K562 (cell line): ENCODE measurements at regions of chr3 and their contacts with region 1.

Region 1: DNA sequence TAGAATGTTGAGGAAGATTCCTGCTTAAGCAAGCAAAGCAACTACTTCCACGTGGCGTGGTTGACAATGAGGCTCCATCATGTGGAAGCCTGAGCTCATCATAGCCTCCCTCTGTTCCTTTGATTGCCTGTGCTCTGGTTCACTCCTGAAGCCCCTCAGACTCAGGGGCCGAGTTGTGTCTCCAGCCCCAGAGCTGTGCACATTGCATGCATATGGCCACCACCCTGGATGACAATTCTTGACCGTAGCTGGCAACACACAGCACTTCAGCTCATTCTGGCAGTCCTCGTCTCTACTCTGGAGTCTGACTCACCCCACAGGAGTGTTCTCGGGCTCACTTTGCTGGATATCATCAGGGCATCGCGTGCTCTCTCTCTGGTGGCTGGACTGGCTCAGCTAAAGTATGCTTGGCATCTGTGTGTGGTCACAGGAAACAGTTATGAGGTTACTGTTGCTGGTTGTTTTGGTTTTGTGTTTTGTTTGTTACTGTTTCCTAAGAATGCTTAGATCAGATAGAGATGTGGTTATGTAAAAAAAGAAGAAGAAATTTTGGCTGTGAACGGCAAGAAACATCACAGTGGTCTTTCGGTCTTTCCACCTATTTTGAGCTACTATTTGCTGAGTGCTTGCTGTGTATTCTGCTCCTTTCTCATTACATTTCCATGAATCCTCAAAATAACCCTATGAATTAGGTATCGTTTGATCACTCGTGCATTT is 41.6 kb upstream of the MRPS22 start:
- DNase-seq: no peak
- ATAC-seq: no peak
- H3K4me3 ChIP-seq: no peak overlapping the region
- H3K27ac ChIP-seq: peak overlapping the region; percentile 12; the same call in 1 of the 3 replicates
- H3K4me1 ChIP-seq: peaks cover 42 to 74% of the 10 kb centered on the region in 2 experiments
- H3K27me3 ChIP-seq: no peaks in the 10 kb centered on the region; a peak in 1 of 5 replicates
- CTCF ChIP-seq: no peak
- EP300 ChIP-seq: no peak
- POLR2A ChIP-seq: no peak
- RAD21 ChIP-seq: no peak

Region 2: DNA sequence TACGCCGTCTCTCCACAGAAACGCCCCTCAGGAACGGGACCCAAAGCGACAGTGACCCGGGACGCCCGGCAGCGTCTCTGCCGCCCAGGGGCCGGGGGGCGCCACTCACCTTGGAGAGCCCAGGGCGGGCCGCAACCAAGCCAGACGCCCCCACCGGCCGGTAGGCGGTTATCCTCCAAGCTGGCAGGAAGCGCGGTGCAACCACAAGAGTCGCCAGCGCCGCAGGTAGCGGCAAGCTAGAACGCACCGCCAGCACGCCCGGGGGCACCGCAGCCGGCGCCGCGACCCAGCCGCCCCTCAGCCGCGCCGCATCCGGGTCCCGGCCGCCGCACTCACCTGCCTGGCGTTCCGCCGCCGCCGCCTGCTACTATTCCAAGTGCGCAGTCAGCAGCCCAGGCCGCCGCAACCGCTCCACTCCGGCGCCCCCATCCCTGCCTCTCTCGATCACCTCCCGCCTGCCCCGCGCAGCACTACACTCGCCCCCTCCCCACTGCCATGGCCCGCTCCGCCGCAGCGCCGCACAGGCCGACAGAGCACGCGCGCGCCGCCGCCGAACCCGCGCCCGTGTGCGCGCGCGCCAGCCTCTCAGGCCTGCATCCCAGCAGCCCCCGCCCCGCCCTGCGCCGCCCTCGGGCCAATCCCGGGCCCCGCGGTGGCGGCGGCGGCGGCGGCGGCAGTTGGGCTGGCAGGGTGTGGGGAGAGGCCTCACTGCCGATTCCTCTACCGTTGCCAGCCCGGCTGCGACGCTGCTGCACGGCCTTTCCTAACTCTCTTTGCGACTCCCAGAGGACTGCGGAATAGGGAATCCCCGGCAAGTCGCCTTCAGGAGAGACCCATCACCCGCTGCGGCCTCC is 467.7 kb before region 1 on chr3 and contains the start of gene PIK3CB:
- CTCF ChIA-PET with region 1: no interaction called
- POLR2A ChIA-PET with region 1: no interaction called
- in situ Hi-C with region 1: no loop called
- intact Hi-C with region 1: no loop called
- DNase-seq: peak; percentile 91 to 94 (median 92)
- ATAC-seq: peak; percentile 88
- H3K4me3 ChIP-seq: peak within 1 kb of the TSS; percentile 99
- H3K27ac ChIP-seq: peak within 1 kb of the TSS; percentile 91
- H3K4me1 ChIP-seq: peaks cover 8 to 9% of the 10 kb centered on the region in 2 experiments; a peak in 4 of 5 replicates
- H3K27me3 ChIP-seq: no peaks in the 10 kb centered on the region
- CTCF ChIP-seq: peak; percentile 59 to 97 (median 75)
- EP300 ChIP-seq: peak; percentile 2; the same call in 1 of the 2 replicates
- POLR2A ChIP-seq: peak; percentile 94
- RAD21 ChIP-seq: peak; percentile 61 to 70
- polyA plus RNA-seq, gene PIK3CB: 15.3 to 19.6 TPM

Region 3: DNA sequence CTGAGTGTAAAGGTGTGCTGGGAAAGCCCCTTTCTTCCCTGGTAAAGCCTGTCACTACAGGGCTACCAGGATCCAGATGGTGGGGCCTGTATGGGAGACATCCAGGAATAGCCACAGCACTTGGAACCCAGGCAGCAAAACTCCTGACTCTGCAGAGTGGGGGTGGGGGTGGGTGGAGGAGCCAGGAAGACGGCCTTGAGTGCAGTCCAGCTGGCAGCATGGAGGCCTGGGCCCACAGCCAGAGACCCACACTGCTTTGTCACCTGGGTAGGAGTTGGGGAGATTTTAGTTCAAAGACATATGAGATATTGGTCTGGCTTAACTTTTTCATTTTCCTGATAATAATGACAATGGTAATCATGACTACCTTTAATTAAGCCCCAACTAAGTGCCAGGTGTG is 75.1 kb before region 1 on chr3:
- CTCF ChIA-PET with region 1: no interaction called
- POLR2A ChIA-PET with region 1: no interaction called
- in situ Hi-C with region 1: no loop called
- intact Hi-C with region 1: loop called (anchors 1 kb)
- DNase-seq: no peak
- ATAC-seq: no peak
- H3K4me3 ChIP-seq: no peak overlapping the region
- H3K27ac ChIP-seq: no peak overlapping the region
- H3K4me1 ChIP-seq: peaks cover 2 to 8% of the 10 kb centered on the region in 2 experiments; a peak in 3 of 5 replicates
- H3K27me3 ChIP-seq: no peaks in the 10 kb centered on the region
- CTCF ChIP-seq: no peak
- EP300 ChIP-seq: no peak
- POLR2A ChIP-seq: no peak
- RAD21 ChIP-seq: no peak

Region 4: GRCh38 chr3:139312959-139313358 is 10.7 kb after region 1 on chr3:
- CTCF ChIA-PET with region 1: no interaction called
- POLR2A ChIA-PET with region 1: interaction called, 19 read pairs
- in situ Hi-C with region 1: no loop called
- intact Hi-C with region 1: no loop called
- DNase-seq: peak; percentile 82 to 92 (median 88)
- ATAC-seq: peak; percentile 77
- H3K4me3 ChIP-seq: no peak overlapping the region
- H3K27ac ChIP-seq: peak overlapping the region; percentile 61
- H3K4me1 ChIP-seq: peaks cover 32 to 62% of the 10 kb centered on the region in 2 experiments
- H3K27me3 ChIP-seq: no peaks in the 10 kb centered on the region
- CTCF ChIP-seq: no peak
- EP300 ChIP-seq: peak; percentile 47; the same call in 1 of the 2 replicates
- POLR2A ChIP-seq: 0 out of 2 replicates have a peak, but pooled peaks have one; percentile 34
- RAD21 ChIP-seq: no peak

Region 5: GRCh38 chr3:139377378-139377777 is 75.1 kb after region 1 on chr3:
- CTCF ChIA-PET with region 1: no interaction called
- POLR2A ChIA-PET with region 1: no interaction called
- in situ Hi-C with region 1: no loop called
- intact Hi-C with region 1: no loop called
- DNase-seq: no peak
- ATAC-seq: no peak
- H3K4me3 ChIP-seq: no peak overlapping the region
- H3K27ac ChIP-seq: no peak overlapping the region
- H3K4me1 ChIP-seq: no peaks in the 10 kb centered on the region; a peak in 2 of 5 replicates
- H3K27me3 ChIP-seq: no peaks in the 10 kb centered on the region
- CTCF ChIP-seq: no peak
- EP300 ChIP-seq: no peak
- POLR2A ChIP-seq: no peak
- RAD21 ChIP-seq: no peak

Region 6: GRCh38 chr3:139455855-139456254 is 153.6 kb after region 1 on chr3:
- CTCF ChIA-PET with region 1: no interaction called
- POLR2A ChIA-PET with region 1: no interaction called
- in situ Hi-C with region 1: no loop called
- intact Hi-C with region 1: no loop called
- DNase-seq: peak in 2 of 4 experiments; percentile 6 to 12
- ATAC-seq: peak; percentile 75
- H3K4me3 ChIP-seq: no peak overlapping the region
- H3K27ac ChIP-seq: no peak overlapping the region
- H3K4me1 ChIP-seq: no peaks in the 10 kb centered on the region
- H3K27me3 ChIP-seq: peaks cover 0 to 9% of the 10 kb centered on the region in 2 experiments; a peak in 1 of 5 replicates
- CTCF ChIP-seq: peak in 2 of 3 experiments; percentile 15 to 24; a peak in 1 of 6 replicates
- EP300 ChIP-seq: no peak
- POLR2A ChIP-seq: no peak
- RAD21 ChIP-seq: no peak